ENCODE measurements at regions of chr11 and their contacts with region 1.

Region 1: GRCh38 chr11:78982473-78982872 is 407.8 kb upstream of the NARS2 start:
- DNase-seq: peak; percentile 72
- H3K4me3 ChIP-seq: no peak overlapping the region
- H3K27ac ChIP-seq: peak overlapping the region; percentile 75 to 100
- H3K4me1 ChIP-seq: peaks cover 13 to 68% of the 10 kb centered on the region in 2 experiments; a peak in 3 of 4 replicates
- H3K27me3 ChIP-seq: no peaks in the 10 kb centered on the region
- CTCF ChIP-seq: no peak
- EP300 ChIP-seq: peak; percentile 95 to 100
- RAD21 ChIP-seq: peak; percentile 49

Region 2: GRCh38 chr11:79018371-79018849 is 35.9 kb after region 1 on chr11:
- CTCF ChIA-PET with region 1: interaction called, 4 read pairs
- POLR2A ChIA-PET with region 1: interaction called, 11 read pairs
- DNase-seq: peak; percentile 65
- H3K4me3 ChIP-seq: no peak overlapping the region
- H3K27ac ChIP-seq: peak overlapping the region; percentile 87 to 99
- H3K4me1 ChIP-seq: peaks cover 33 to 66% of the 10 kb centered on the region in 2 experiments
- H3K27me3 ChIP-seq: no peaks in the 10 kb centered on the region
- CTCF ChIP-seq: no peak
- EP300 ChIP-seq: peak; percentile 98 to 99
- RAD21 ChIP-seq: peak; percentile 47